ENCODE measurements at regions of chr17 and their contacts with region 1.

Region 1: DNA sequence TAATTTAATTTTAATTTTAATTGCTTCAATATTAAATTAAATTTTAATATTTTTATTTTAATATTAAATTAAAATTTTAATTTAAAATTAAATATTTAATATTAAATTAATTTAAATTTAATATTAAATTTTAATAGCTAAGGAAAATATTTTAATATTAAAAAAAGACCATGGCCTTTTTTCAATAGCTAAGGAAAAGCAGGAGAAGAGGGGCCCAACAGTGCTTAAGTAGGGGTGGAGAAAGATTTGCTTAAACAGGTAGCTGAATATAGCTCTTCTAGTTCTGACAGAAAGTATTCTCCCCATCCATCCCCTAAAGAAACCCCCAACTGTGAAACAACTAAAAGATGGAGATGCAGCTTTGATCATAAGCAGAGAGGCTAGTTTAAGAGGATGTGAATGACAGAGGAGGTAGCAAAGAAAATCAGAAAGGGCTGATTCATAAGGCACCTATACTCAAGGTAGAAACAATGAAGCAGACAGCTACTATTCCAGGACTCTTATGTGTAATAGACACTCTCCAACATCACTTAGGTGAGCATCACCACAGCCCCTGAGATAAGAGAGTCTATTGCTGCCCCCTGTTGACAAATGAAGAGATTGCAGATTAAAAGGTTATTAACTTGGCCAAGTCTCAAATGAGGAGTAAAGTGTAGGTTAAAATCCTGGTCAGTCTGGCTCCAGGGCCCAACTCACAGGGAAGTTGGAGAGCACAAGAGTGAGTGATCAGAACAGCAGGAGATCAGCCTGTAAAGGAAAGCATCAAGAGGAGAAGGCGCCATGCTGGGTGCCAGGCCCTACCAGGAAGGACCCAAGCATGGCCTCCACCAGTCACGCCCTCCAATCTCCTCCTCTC is 7.8 kb upstream of the RNASEK start:
- DNase-seq: peak in 1 of 2 donors; percentile 36
- ATAC-seq: peak; percentile 50 to 80 (median 72)
- H3K4me3 ChIP-seq: no peak overlapping the region
- H3K27ac ChIP-seq: no peak overlapping the region
- H3K4me1 ChIP-seq: peaks cover 0 to 13% (median 4%) of the 10 kb centered on the region in 9 donors
- H3K27me3 ChIP-seq: no peaks in the 10 kb centered on the region
- CTCF ChIP-seq: peak; percentile 64 to 81 (median 73)

Region 2: DNA sequence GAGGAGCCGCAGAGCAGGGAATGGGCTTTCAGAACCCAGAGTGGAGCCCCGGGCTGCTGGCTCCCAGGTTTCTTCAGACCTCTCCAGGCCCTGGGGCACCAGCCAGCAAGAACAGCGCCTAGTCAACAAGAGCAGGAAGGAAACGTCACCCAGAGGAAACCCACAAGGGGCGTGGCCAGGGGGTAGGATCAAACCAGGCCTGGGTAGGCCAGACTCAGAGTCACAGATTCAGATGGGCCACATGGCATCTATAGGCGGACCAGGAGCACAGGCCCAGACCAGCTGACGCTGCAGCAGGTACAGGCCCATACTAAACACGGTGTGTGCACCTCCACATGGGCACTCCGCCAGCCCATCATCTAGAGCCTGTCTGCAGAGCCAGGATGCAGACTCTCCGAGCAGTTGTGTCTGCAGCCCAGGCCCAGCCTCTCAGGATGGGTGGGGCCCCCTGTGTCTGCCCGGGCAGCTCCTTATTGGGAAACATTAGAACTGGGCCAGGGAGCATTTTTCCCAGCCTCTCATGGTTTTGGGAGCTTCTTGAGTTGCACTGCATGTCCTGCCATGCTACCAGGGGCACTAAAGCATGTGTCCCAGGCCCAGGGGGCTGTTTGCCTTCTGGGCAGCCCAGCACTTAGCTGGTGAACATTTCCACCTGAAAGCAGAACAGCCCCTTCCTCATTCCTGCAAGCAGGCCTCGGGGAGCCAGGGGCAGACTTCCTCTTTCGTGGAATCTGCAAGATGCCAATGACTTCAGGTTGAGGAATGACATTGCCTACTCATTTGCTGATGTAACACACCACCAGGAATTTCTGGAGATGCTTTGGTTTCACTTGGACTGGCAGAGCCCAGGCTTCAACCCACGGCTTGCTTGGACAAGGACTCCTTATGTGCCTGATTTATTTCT is 1420.0 kb before region 1 on chr17 and contains the start of gene NLRP1:
- intact Hi-C with region 1: loop called in 1 of 10 experiments (anchors 5 kb)
- DNase-seq: peak; percentile 84 to 92
- ATAC-seq: peak; percentile 93 to 97 (median 95)
- H3K4me3 ChIP-seq: peak within 1 kb of the TSS; percentile 36 to 71 (median 63)
- H3K27ac ChIP-seq: peak within 1 kb of the TSS; percentile 74 to 96 (median 91)
- H3K4me1 ChIP-seq: peaks cover 10 to 56% (median 42%) of the 10 kb centered on the region in 9 donors
- H3K27me3 ChIP-seq: no peaks in the 10 kb centered on the region
- CTCF ChIP-seq: no peak
- total RNA-seq, gene NLRP1: 4.9 to 11.3 (median 7.6) TPM

Region 3: GRCh38 chr17:6660805-6661463 is 343.7 kb before region 1 on chr17:
- intact Hi-C with region 1: loop called in 9 of 10 experiments (anchors 5 to 10 kb)
- DNase-seq: no peak
- ATAC-seq: peak in 3 of 8 donors; percentile 38 to 59 (median 57)
- H3K4me3 ChIP-seq: no peak overlapping the region
- H3K27ac ChIP-seq: no peak overlapping the region
- H3K4me1 ChIP-seq: peaks cover 0 to 19% (median 0%) of the 10 kb centered on the region in 9 donors
- H3K27me3 ChIP-seq: peaks cover 0 to 59% (median 41%) of the 10 kb centered on the region in 7 donors
- CTCF ChIP-seq: no peak

Region 4: GRCh38 chr17:6831661-6832263 is 172.9 kb before region 1 on chr17 and contains the start of gene TEKT1:
- intact Hi-C with region 1: loop called in 1 of 10 experiments (anchors 5 kb)
- DNase-seq: peak; percentile 68 to 79
- ATAC-seq: peak; percentile 61 to 94 (median 90)
- H3K4me3 ChIP-seq: peak within 1 kb of the TSS in 9 of 10 donors; percentile 5 to 48 (median 37)
- H3K27ac ChIP-seq: no peak within 1 kb of the TSS
- H3K4me1 ChIP-seq: peaks cover 0 to 13% (median 0%) of the 10 kb centered on the region in 9 donors
- H3K27me3 ChIP-seq: peaks cover 5 to 97% (median 73%) of the 10 kb centered on the region in 7 donors
- CTCF ChIP-seq: no peak
- total RNA-seq, gene TEKT1: not detected

Region 5: DNA sequence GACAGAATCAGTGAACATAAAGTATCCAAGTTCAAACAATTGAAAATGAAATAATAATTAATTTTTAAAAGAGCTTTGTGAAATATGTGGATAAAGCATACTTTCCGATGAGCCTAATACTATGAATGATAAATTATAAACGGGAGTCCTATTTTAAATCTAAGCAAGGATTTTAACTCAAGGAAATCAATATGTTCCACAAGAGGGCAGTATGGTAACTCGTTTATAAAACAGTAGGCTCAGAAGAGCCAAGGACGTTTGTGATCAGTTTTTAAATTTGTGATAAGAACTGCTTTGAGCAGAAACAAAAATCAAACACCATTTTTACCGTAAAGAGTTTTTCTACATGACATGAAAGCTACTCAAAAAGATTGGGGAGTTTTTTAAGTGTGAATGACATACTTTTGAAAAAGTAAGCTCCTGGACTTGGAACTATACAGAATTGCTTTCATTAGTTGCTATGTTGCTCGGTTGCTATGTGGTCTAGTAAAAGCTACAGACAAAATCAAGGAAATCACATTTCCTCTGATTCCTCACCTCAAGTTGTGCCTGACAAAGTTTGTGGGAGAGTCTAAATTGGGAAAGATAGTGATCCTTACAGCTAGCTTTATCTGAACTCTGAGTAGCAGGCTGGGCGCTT is 161.3 kb before region 1 on chr17:
- intact Hi-C with region 1: loop called in 4 of 10 experiments (anchors 5 to 10 kb)
- DNase-seq: no peak
- ATAC-seq: peak in 3 of 8 donors; percentile 62 to 67 (median 67)
- H3K4me3 ChIP-seq: no peak overlapping the region
- H3K27ac ChIP-seq: no peak overlapping the region
- H3K4me1 ChIP-seq: peaks cover 0 to 7% (median 0%) of the 10 kb centered on the region in 9 donors
- H3K27me3 ChIP-seq: peaks cover 0 to 50% (median 30%) of the 10 kb centered on the region in 7 donors
- CTCF ChIP-seq: peak; percentile 22 to 73 (median 63)

Region 6: GRCh38 chr17:6913608-6914443 is 90.8 kb before region 1 on chr17:
- intact Hi-C with region 1: loop called (anchors 1 to 5 kb)
- DNase-seq: peak; percentile 80 to 84
- ATAC-seq: peak; percentile 78 to 95 (median 84)
- H3K4me3 ChIP-seq: peak overlapping the region in 7 of 10 donors; percentile 24 to 53 (median 44)
- H3K27ac ChIP-seq: no peak overlapping the region
- H3K4me1 ChIP-seq: peaks cover 0 to 22% (median 9%) of the 10 kb centered on the region in 9 donors
- H3K27me3 ChIP-seq: peaks cover 0 to 12% (median 5%) of the 10 kb centered on the region in 7 donors
- CTCF ChIP-seq: peak; percentile 77 to 94 (median 87)

Region 7: GRCh38 chr17:6919158-6919557 is 85.5 kb before region 1 on chr17:
- intact Hi-C with region 1: loop called in 9 of 10 experiments (anchors 1 to 5 kb)
- DNase-seq: no peak
- ATAC-seq: no peak
- H3K4me3 ChIP-seq: no peak overlapping the region
- H3K27ac ChIP-seq: no peak overlapping the region
- H3K4me1 ChIP-seq: peaks cover 0 to 3% (median 2%) of the 10 kb centered on the region in 9 donors
- H3K27me3 ChIP-seq: peaks cover 0 to 11% (median 2%) of the 10 kb centered on the region in 7 donors
- CTCF ChIP-seq: no peak

Measured in heart right ventricle (tissue), 16 donors.